Calu3 (cell line): ENCODE measurements at regions of chr17 and their contacts with region 1.

Region 1: GRCh38 chr17:37399404-37399803 is 7.2 kb downstream of the ACACA start:
- DNase-seq: peak; percentile 42
- H3K4me3 Mint-ChIP-seq: no peak overlapping the region
- H3K27ac Mint-ChIP-seq: no peak overlapping the region
- H3K4me1 Mint-ChIP-seq: peaks cover 25% of the 10 kb centered on the region
- H3K27me3 Mint-ChIP-seq: no peaks in the 10 kb centered on the region
- CTCF ChIP-seq: no peak

Region 2: GRCh38 chr17:37107406-37108083 is 291.9 kb before region 1 on chr17:
- CTCF ChIA-PET with region 1: no interaction called
- intact Hi-C with region 1: no loop called
- DNase-seq: no peak
- H3K4me3 Mint-ChIP-seq: no peak overlapping the region
- H3K27ac Mint-ChIP-seq: no peak overlapping the region
- H3K4me1 Mint-ChIP-seq: no peaks in the 10 kb centered on the region
- H3K27me3 Mint-ChIP-seq: no peaks in the 10 kb centered on the region
- CTCF ChIP-seq: no peak

Region 3: DNA sequence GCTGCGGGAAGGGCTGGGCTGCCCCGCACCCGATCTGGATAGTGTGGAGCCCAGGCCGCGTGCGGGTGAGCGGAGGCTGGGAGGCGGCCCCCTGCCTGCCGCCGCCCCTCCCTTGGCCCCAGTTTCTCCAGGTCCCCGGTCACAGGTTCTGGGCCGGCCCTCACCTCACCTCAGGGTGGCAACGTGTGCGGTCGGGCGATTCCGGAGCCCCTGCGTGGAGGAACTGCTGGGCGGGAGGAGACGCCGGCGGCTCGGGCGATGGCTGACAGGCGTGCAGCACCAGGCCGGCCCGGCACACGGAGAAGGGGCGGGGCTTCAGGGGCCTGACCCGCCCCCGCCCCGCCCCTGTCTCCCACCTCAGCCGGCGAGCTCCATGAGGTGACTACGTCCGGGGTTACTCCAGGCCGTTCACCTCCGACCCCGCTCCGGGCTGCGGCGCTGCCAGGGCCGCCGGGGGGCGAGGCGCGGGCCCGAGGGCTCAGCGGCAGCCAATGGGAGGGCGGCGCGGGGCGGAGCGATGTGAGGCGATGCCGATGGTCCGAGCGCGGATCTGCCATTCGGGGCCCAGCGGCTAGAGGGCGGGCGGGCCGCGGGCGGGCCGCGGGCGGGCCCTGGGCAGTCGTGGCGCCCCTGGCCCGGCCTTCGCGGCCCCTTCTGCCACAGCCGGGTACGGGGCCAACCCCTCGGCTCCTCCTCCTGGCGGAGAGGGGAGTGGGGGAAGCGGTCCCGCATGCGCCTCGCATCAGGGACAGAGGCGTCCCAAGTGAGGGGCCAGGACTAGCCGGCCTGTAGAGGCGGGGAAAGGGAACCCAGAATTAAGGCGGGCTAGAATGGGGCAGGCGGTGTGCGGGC is 40.3 kb before region 1 on chr17:
- CTCF ChIA-PET with region 1: interaction called, 6 read pairs
- intact Hi-C with region 1: loop called (anchors 5 kb)
- DNase-seq: peak; percentile 100
- H3K4me3 Mint-ChIP-seq: peak overlapping the region; percentile 100
- H3K27ac Mint-ChIP-seq: peak overlapping the region; percentile 90
- H3K4me1 Mint-ChIP-seq: peaks cover 45% of the 10 kb centered on the region
- H3K27me3 Mint-ChIP-seq: no peaks in the 10 kb centered on the region
- CTCF ChIP-seq: peak; percentile 97